Endothelial cell of umbilical vein (primary cell): ENCODE measurements at regions of chr6 and their contacts with region 1.

Region 1: DNA sequence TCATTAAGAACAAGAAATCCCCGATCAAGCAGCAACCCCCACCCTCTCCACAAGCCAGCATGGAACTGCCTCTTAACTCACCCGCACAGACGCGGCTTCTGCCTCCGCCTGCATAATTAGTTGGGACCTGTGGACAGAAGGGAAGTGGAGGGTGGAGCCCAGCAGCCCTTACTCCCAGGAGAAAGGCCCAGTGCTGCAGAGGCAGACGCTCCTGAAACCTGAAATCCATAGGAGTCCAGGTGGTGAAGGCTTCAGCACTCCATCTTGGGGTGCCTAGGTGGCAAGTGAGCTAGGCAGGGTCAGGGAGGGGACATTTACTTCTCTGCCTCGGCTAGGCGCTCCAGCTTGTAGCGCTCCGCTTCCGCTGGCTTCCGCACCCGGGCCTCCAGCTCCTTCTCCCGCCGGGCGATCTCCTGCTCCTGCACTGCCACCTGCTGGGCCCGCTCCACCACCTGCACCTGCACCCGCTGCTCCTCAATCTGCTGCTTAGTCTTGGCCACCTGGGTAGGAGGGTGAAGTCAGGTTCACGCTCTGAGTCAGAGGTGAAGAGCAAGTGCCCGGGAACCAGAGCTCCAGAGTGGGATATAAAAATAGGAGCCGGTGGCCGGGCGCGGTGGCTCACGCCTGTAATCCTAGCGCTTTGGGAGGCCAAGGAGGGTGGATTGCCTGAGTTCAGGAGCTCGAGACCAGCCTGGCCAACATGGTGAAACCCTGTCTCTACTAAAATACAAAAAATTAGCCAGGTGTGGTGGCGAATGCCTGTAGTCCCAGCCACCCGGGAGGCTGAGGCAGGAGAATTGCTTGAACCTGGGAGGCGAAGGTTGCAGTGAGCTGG is 10.7 kb downstream of the TUBB start:
- DNase-seq: peak; percentile 83
- H3K4me3 ChIP-seq: no peak overlapping the region
- H3K27ac ChIP-seq: no peak overlapping the region
- H3K4me1 ChIP-seq: peaks cover 2% of the 10 kb centered on the region
- H3K27me3 ChIP-seq: no peaks in the 10 kb centered on the region
- CTCF ChIP-seq: peak; percentile 75 to 85
- POLR2A ChIP-seq: no peak

Region 2: GRCh38 chr6:30600451-30600961 is 130.3 kb before region 1 on chr6:
- CTCF ChIA-PET with region 1: interaction called, 12 read pairs
- POLR2A ChIA-PET with region 1: no interaction called
- dilution Hi-C with region 1: no loop called
- intact Hi-C with region 1: no loop called
- DNase-seq: no peak
- H3K4me3 ChIP-seq: no peak overlapping the region
- H3K27ac ChIP-seq: no peak overlapping the region
- H3K4me1 ChIP-seq: peaks cover 8% of the 10 kb centered on the region
- H3K27me3 ChIP-seq: no peaks in the 10 kb centered on the region
- CTCF ChIP-seq: no peak
- POLR2A ChIP-seq: peak; percentile 20

Region 3: GRCh38 chr6:30646458-30647241 is 84.2 kb before region 1 on chr6 and contains the start of gene C6orf136:
- CTCF ChIA-PET with region 1: interaction called, 16 read pairs
- POLR2A ChIA-PET with region 1: no interaction called
- dilution Hi-C with region 1: no loop called
- intact Hi-C with region 1: no loop called
- DNase-seq: peak; percentile 93
- H3K4me3 ChIP-seq: peak within 1 kb of the TSS; percentile 70 to 99 (median 76)
- H3K27ac ChIP-seq: peak within 1 kb of the TSS; percentile 26
- H3K4me1 ChIP-seq: peaks cover 8% of the 10 kb centered on the region
- H3K27me3 ChIP-seq: no peaks in the 10 kb centered on the region
- CTCF ChIP-seq: no peak
- POLR2A ChIP-seq: no peak
- total RNA-seq, gene C6orf136: 18.5 and 21.0 TPM in 2 replicates

Region 4: DNA sequence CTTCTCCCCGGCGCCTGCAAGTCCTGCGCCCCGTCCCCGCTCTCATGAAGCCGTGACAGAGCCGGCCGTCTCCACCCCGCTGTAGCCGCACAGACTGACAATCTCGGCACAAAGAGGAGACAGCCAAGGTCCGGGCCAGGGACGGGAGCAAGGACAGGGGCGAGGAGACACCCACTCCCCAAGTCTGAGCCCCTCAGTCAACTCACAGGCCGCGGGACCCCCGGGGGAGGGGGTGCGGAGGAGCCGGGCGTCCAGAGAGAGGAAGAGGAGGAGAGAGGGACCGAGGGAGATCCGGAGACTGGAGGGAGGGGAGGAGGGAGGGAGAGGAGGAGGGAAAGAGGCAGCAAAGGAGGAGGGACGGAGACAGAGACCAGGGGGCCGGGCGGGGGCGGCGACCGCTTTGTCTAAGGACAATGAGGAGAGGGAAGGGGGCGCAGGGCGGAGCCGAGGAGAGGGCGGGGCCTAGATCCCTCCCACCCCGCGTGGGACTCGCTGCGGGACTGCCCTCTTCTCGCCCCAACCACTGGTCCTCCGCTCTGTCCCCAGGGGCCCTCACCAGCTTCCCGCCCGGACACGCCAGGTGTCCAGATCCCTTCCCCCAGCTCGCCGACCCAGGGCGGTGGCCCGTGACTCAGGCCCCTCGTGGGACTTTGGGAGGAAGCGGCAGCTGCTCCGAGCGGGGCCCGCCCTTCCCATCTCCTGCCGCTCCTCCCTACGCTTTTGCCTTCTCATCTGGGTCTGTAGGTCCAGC is 43.7 kb before region 1 on chr6:
- CTCF ChIA-PET with region 1: interaction called, 296 read pairs
- POLR2A ChIA-PET with region 1: no interaction called
- dilution Hi-C with region 1: no loop called
- intact Hi-C with region 1: no loop called
- DNase-seq: peak; percentile 93
- H3K4me3 ChIP-seq: peak overlapping the region; percentile 76 to 92 (median 81)
- H3K27ac ChIP-seq: peak overlapping the region; percentile 93
- H3K4me1 ChIP-seq: peaks cover 33% of the 10 kb centered on the region
- H3K27me3 ChIP-seq: no peaks in the 10 kb centered on the region
- CTCF ChIP-seq: no peak
- POLR2A ChIP-seq: peak; percentile 96

Region 5: GRCh38 chr6:30814136-30815040 is 83.6 kb after region 1 on chr6:
- CTCF ChIA-PET with region 1: interaction called, 29 read pairs
- POLR2A ChIA-PET with region 1: interaction called, 4 read pairs
- dilution Hi-C with region 1: no loop called
- intact Hi-C with region 1: no loop called
- DNase-seq: peak; percentile 92
- H3K4me3 ChIP-seq: no peak overlapping the region
- H3K27ac ChIP-seq: peak overlapping the region; percentile 93
- H3K4me1 ChIP-seq: peaks cover 37% of the 10 kb centered on the region
- H3K27me3 ChIP-seq: no peaks in the 10 kb centered on the region
- CTCF ChIP-seq: no peak
- POLR2A ChIP-seq: no peak

Region 6: DNA sequence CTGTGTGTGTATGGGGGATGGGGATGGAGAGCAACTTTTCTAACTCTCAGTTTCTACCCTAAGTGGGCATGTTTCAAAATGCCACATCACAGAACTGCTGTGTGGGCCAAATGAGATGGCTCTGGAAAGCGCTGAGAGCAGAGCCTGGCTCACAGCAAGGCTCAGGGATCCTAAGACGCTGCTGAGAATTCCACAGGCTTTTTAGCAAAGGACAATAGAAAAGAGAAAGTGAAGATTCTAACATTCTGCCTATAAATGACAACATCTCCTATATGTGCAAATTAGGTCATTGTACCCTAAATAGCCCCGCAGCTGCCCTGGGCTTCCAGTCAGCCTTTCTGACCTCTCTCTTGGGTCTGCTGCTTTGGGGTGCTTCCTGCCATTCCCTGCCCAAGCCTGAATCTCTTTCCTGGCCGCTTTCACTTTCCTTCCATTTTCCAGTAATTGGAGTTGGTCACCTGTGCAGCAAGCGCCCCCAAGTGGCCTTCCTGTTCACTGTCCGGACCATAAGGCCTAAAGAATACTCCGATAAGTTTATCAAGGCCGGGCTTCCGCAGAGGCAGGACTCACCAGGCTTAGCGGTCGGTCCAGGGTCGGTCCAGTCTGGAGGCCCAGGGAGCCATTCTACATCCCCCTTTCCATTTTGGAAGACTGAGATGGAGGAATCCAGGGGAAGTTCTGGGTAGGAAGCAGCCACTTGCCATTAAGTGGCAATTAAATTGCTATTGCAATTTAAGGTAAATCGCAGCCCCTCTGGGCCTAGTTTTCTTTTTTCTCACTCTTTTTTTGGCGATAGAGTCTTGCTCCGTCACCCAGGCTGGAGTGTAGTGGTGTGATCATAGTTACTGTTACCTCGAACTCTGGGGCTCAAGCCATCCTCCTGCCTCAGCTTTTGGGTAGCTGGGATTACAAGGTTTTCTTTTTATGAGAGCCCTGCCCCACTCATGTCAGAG is 146.9 kb after region 1 on chr6:
- CTCF ChIA-PET with region 1: interaction called, 8 read pairs
- POLR2A ChIA-PET with region 1: no interaction called
- dilution Hi-C with region 1: loop called (anchors 25 kb)
- intact Hi-C with region 1: loop called (anchors 1 kb)
- DNase-seq: peak; percentile 92
- H3K4me3 ChIP-seq: peak overlapping the region in 2 of 3 experiments; percentile 9 to 31
- H3K27ac ChIP-seq: peak overlapping the region; percentile 81
- H3K4me1 ChIP-seq: peaks cover 23% of the 10 kb centered on the region
- H3K27me3 ChIP-seq: peaks cover 0 to 2% of the 10 kb centered on the region in 2 experiments
- CTCF ChIP-seq: peak; percentile 83 to 90
- POLR2A ChIP-seq: peak; percentile 49